Posterior vena cava (tissue), 2 donors: ENCODE measurements at regions of chr5 and their contacts with region 1.

Region 1: DNA sequence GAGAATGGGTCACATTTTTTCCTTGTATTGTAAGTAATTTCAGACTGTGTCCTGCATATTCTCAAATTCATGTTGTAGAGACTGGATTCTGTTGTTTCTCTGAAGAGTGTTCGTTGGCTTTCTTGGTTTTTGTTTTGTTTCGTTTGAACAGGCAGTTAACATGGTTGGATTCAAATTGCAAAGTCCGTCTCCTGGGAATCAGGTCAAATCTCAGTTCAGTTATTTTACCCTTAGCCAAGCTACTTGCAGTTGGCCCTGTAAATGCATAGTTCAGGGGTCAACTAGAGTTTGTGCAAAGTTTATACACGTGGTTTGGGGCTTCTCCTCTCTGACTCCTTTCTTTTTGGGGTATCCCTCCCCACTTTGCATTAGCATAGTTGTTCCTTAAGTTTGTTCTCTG is 21.7 kb upstream of the FBXW11 start:
- DNase-seq: no peak

Region 2: GRCh38 chr5:172044631-172045314 is 16.6 kb after region 1 on chr5:
- intact Hi-C with region 1: loop called in 1 of 2 experiments (anchors 1 kb)
- DNase-seq: no peak

Region 3: GRCh38 chr5:172052450-172053236 is 24.5 kb after region 1 on chr5:
- intact Hi-C with region 1: loop called in 1 of 2 experiments (anchors 1 kb)
- DNase-seq: peak; percentile 91